CD8-positive, alpha-beta T cell (primary cell): ENCODE measurements at regions of chr3 and their contacts with region 1.

Region 1: GRCh38 chr3:11568503-11569155 is 75.1 kb downstream of the VGLL4 start:
- DNase-seq: no peak
- ATAC-seq: no peak
- H3K4me3 ChIP-seq: no peak overlapping the region
- H3K4me3 Mint-ChIP-seq: no peak overlapping the region
- H3K27ac ChIP-seq: no peak overlapping the region
- H3K27ac Mint-ChIP-seq: peak overlapping the region; percentile 70
- H3K4me1 ChIP-seq: no peaks in the 10 kb centered on the region
- H3K4me1 Mint-ChIP-seq: peaks cover 5% of the 10 kb centered on the region
- H3K27me3 ChIP-seq: no peaks in the 10 kb centered on the region
- H3K27me3 Mint-ChIP-seq: no peaks in the 10 kb centered on the region
- CTCF ChIP-seq: no peak

Region 2: DNA sequence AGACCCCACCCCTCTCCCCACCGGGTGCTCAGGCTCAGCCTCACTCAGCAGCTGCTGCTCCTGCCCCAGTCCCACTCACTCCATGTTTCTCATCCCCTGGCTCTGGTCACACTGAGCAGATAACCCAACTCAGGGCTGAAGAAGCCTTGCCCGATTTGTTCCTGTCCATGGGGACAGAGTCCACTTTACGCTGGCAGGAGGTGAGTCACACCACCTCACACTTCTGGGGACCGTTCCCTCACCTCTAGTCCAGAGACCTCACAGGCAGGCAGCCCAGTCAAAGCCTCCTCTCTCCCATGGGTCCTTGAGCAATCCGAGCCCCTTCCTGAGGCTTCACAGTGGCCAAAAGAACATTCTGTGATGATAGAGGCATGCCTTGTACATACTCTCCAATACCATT is 1689.9 kb before region 1 on chr3:
- CTCF ChIA-PET with region 1: no interaction called
- POLR2A ChIA-PET with region 1: no interaction called
- intact Hi-C with region 1: no loop called
- DNase-seq: no peak
- ATAC-seq: no peak
- H3K4me3 ChIP-seq: no peak overlapping the region
- H3K4me3 Mint-ChIP-seq: no peak overlapping the region
- H3K27ac ChIP-seq: no peak overlapping the region
- H3K27ac Mint-ChIP-seq: no peak overlapping the region
- H3K4me1 ChIP-seq: no peaks in the 10 kb centered on the region
- H3K4me1 Mint-ChIP-seq: no peaks in the 10 kb centered on the region
- H3K27me3 ChIP-seq: no peaks in the 10 kb centered on the region
- H3K27me3 Mint-ChIP-seq: no peaks in the 10 kb centered on the region
- CTCF ChIP-seq: no peak

Region 3: GRCh38 chr3:11552289-11553264 is 16.1 kb before region 1 on chr3:
- CTCF ChIA-PET with region 1: no interaction called
- POLR2A ChIA-PET with region 1: no interaction called
- intact Hi-C with region 1: loop called in 1 of 2 experiments (anchors 1 kb)
- DNase-seq: no peak
- ATAC-seq: no peak
- H3K4me3 ChIP-seq: no peak overlapping the region
- H3K4me3 Mint-ChIP-seq: no peak overlapping the region
- H3K27ac ChIP-seq: no peak overlapping the region
- H3K27ac Mint-ChIP-seq: no peak overlapping the region
- H3K4me1 ChIP-seq: no peaks in the 10 kb centered on the region
- H3K4me1 Mint-ChIP-seq: no peaks in the 10 kb centered on the region
- H3K27me3 ChIP-seq: no peaks in the 10 kb centered on the region
- H3K27me3 Mint-ChIP-seq: no peaks in the 10 kb centered on the region
- CTCF ChIP-seq: no peak

Region 4: GRCh38 chr3:11591391-11592282 is 23.0 kb after region 1 on chr3:
- CTCF ChIA-PET with region 1: no interaction called
- POLR2A ChIA-PET with region 1: no interaction called
- intact Hi-C with region 1: no loop called
- DNase-seq: no peak
- ATAC-seq: no peak
- H3K4me3 ChIP-seq: no peak overlapping the region
- H3K4me3 Mint-ChIP-seq: no peak overlapping the region
- H3K27ac ChIP-seq: no peak overlapping the region
- H3K27ac Mint-ChIP-seq: no peak overlapping the region
- H3K4me1 ChIP-seq: no peaks in the 10 kb centered on the region
- H3K4me1 Mint-ChIP-seq: peaks cover 59% of the 10 kb centered on the region
- H3K27me3 ChIP-seq: no peaks in the 10 kb centered on the region
- H3K27me3 Mint-ChIP-seq: no peaks in the 10 kb centered on the region
- CTCF ChIP-seq: no peak